Activated B cell treated with CpG ODN at 0.5 μM for 24 hours (primary cell): ENCODE measurements at regions of chr2 and their contacts with region 1.

Region 1: GRCh38 chr2:130797493-130798435 is 39.0 kb upstream of the ARHGEF4 start:
- DNase-seq: peak; percentile 91
- ATAC-seq: peak; percentile 93
- H3K4me3 Mint-ChIP-seq: peak overlapping the region; percentile 77
- H3K27ac Mint-ChIP-seq: no peak overlapping the region
- H3K4me1 Mint-ChIP-seq: peaks cover 7% of the 10 kb centered on the region
- H3K27me3 Mint-ChIP-seq: peaks cover 3% of the 10 kb centered on the region
- CTCF ChIP-seq: no peak

Region 2: GRCh38 chr2:130727286-130728018 is 70.3 kb before region 1 on chr2:
- CTCF ChIA-PET with region 1: no interaction called
- POLR2A ChIA-PET with region 1: no interaction called
- intact Hi-C with region 1: loop called (anchors 1 kb)
- DNase-seq: peak; percentile 67
- ATAC-seq: peak; percentile 96
- H3K4me3 Mint-ChIP-seq: peak overlapping the region; percentile 79
- H3K27ac Mint-ChIP-seq: no peak overlapping the region
- H3K4me1 Mint-ChIP-seq: peaks cover 15% of the 10 kb centered on the region
- H3K27me3 Mint-ChIP-seq: no peaks in the 10 kb centered on the region
- CTCF ChIP-seq: no peak

Region 3: DNA sequence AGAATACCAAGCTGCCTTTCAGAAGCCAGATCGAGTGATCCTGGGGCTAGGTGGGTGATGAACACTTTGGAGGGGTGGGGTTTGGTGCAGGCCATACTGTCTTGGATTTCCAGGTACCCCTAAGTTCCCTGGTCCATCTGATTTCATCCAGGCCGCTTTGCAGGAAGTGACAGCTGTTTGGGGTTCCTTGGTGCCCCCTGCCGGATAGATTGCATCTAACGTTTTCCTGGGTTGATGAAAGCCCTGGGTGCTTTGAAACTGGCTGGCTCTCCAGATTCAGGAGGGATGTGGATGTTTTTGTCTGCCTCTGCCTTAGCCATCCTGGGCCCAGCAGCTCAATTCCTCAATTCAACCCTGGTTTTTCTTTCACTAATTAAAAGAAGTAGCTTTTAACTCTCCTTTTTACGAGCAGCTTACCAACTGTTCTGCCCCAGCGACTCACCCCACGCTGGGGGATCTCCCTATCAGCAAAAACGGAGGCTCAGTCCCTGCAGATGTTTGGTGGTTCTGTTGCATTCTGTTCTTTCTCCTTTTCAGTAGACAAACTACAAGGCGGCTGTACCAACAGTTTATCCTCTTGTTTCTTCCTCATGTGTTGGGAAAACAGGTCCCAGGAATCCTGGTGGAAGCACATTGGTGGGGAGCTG is 76.1 kb after region 1 on chr2:
- CTCF ChIA-PET with region 1: interaction called, 132 read pairs
- POLR2A ChIA-PET with region 1: interaction called, 17 read pairs
- intact Hi-C with region 1: loop called (anchors 1 kb)
- DNase-seq: peak; percentile 43
- ATAC-seq: peak; percentile 86
- H3K4me3 Mint-ChIP-seq: peak overlapping the region; percentile 21
- H3K27ac Mint-ChIP-seq: no peak overlapping the region
- H3K4me1 Mint-ChIP-seq: peaks cover 6% of the 10 kb centered on the region
- H3K27me3 Mint-ChIP-seq: peaks cover 4% of the 10 kb centered on the region
- CTCF ChIP-seq: no peak

Region 4: DNA sequence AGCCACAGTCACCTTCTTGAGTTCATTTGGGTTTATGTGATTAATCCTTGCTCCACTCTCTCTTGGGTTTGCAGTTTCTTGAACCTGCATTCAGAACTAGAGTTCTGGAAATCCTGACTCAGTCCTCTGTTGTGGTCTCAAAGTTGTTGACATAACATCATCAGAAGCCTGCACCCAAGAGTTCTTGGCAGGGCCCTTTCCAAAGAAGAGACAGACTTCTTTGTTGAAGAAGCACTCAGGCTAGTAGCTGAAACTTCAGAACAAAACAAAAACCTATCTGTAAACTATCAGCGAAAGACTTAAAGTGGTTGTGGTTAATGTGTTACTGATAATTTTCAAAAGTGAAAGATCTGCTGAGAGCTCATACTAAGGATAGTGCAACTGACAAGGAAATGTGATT is 174.6 kb after region 1 on chr2:
- CTCF ChIA-PET with region 1: no interaction called
- POLR2A ChIA-PET with region 1: no interaction called
- intact Hi-C with region 1: no loop called
- DNase-seq: no peak
- ATAC-seq: no peak
- H3K4me3 Mint-ChIP-seq: no peak overlapping the region
- H3K27ac Mint-ChIP-seq: no peak overlapping the region
- H3K4me1 Mint-ChIP-seq: no peaks in the 10 kb centered on the region
- H3K27me3 Mint-ChIP-seq: peaks cover 7% of the 10 kb centered on the region
- CTCF ChIP-seq: no peak

Region 5: DNA sequence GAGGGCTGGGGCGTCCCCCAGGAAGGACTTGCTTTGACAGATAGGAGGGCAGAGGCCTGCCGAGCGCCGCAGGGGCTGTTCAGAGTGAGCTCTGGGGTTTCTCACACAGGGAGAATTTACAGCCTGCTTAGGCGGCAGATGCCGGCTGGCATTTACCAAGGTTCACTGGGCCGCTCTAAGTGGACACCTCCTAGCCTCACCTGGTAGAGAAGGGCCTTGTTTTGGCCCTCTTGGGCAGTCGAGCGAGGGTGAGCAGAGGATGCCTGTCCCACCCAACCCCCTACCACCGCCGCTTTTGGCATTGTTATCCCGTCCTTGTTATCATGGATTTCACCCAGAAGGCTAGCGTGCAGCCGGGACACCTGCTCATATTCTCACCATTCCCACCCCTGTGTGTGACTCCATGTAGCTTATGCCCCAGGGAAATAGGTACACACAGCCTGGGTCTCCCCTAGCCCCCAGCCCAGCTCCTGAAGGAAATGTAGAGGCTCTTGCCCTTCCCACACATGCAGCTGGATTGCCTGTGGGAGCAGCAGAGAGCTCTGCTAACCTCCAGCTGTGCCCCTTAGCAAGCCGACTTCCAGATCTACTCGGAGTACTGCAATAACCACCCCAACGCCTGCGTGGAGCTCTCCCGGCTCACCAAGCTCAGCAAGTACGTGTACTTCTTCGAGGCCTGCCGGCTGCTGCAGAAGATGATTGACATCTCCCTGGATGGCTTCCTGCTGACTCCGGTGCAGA is 243.1 kb after region 1 on chr2:
- CTCF ChIA-PET with region 1: no interaction called
- POLR2A ChIA-PET with region 1: no interaction called
- intact Hi-C with region 1: loop called (anchors 5 kb)
- DNase-seq: no peak
- ATAC-seq: no peak
- H3K4me3 Mint-ChIP-seq: peak overlapping the region; percentile 15
- H3K27ac Mint-ChIP-seq: no peak overlapping the region
- H3K4me1 Mint-ChIP-seq: peaks cover 11% of the 10 kb centered on the region
- H3K27me3 Mint-ChIP-seq: peaks cover 12% of the 10 kb centered on the region
- CTCF ChIP-seq: no peak

Region 6: GRCh38 chr2:131154071-131154531 is 356.3 kb after region 1 on chr2:
- CTCF ChIA-PET with region 1: no interaction called
- POLR2A ChIA-PET with region 1: no interaction called
- intact Hi-C with region 1: loop called (anchors 5 kb)
- DNase-seq: peak; percentile 49
- ATAC-seq: peak; percentile 91
- H3K4me3 Mint-ChIP-seq: no peak overlapping the region
- H3K27ac Mint-ChIP-seq: no peak overlapping the region
- H3K4me1 Mint-ChIP-seq: peaks cover 21% of the 10 kb centered on the region
- H3K27me3 Mint-ChIP-seq: no peaks in the 10 kb centered on the region
- CTCF ChIP-seq: no peak